ENCODE measurements at regions of chr2 and their contacts with region 1.

Region 1: GRCh38 chr2:222976521-222977076 is 75.4 kb upstream of the KCNE4 start:
- DNase-seq: no peak
- H3K4me3 ChIP-seq: no peak overlapping the region
- H3K27ac ChIP-seq: no peak overlapping the region
- H3K4me1 ChIP-seq: no peaks in the 10 kb centered on the region
- H3K27me3 ChIP-seq: no peaks in the 10 kb centered on the region
- CTCF ChIP-seq: no peak

Region 2: GRCh38 chr2:223019987-223020717 is 43.6 kb after region 1 on chr2:
- intact Hi-C with region 1: no loop called
- DNase-seq: no peak
- H3K4me3 ChIP-seq: no peak overlapping the region
- H3K27ac ChIP-seq: no peak overlapping the region
- H3K4me1 ChIP-seq: no peaks in the 10 kb centered on the region
- H3K27me3 ChIP-seq: no peaks in the 10 kb centered on the region
- CTCF ChIP-seq: no peak

Region 3: DNA sequence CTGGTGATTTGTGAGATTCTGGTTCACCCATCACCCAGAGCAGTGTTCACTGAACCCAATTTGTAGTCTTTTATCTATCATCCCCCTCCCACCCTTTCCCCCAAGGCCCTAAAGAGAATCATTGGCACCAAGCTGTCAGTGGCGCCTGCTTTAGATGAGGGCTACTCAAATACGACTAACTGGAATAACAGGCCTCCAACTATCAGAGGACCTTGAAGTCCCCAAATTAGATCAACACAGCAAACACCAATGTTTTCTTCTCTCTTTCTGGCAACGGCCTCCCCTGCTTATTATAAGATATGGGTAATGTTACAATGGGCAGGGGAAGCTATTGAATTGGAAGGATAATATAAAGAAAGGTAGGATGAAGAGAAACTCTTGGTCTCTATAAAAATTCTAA is 393.3 kb after region 1 on chr2:
- intact Hi-C with region 1: loop called (anchors 10 kb)
- DNase-seq: no peak
- H3K4me3 ChIP-seq: no peak overlapping the region
- H3K27ac ChIP-seq: no peak overlapping the region
- H3K4me1 ChIP-seq: no peaks in the 10 kb centered on the region
- H3K27me3 ChIP-seq: no peaks in the 10 kb centered on the region
- CTCF ChIP-seq: no peak

Region 4: DNA sequence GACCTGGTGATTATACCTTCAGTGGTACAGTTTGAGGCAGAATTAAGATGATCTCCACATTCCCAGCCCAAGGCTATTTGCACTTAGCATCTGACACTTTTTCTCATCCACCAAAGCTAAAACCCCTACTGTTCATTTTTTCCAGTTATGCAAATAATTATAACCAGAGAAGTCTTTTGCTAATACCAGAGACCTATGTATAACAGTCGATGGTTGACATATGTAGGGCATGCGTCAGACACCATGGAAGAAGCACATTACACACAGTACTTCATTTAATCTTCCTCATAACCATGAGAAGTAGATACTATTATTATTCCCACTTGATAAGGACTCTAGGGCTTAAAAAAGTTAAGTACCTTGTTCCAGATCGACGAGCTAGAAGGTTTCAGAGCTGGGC is 824.3 kb after region 1 on chr2:
- intact Hi-C with region 1: loop called (anchors 5 kb)
- DNase-seq: no peak
- H3K4me3 ChIP-seq: no peak overlapping the region
- H3K27ac ChIP-seq: no peak overlapping the region
- H3K4me1 ChIP-seq: no peaks in the 10 kb centered on the region
- H3K27me3 ChIP-seq: no peaks in the 10 kb centered on the region
- CTCF ChIP-seq: no peak